MCF 10A (cell line): ENCODE measurements at regions of chr5 and their contacts with region 1.

Region 1: DNA sequence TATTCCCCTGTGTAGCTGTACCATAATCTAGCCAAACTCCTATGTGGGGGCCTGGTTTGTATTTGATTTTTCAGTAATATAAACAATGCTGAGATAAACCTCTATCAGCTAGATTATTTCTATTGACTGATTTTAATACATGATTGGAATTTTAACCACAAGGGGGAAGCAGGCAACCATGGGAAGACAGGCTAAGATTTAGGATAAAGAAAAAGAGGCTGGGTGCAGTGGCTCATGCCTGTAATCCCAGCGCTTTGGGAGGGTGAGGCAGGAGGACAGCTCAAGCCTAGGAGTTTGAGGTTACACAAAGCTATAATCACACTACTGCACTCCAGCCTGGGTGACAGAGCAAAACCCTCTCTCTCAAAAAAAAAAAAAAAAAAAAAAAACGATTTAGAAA is 18.1 kb upstream of the GPX3 start:
- DNase-seq: peak; percentile 77
- H3K4me3 Mint-ChIP-seq: no peak overlapping the region
- H3K27ac Mint-ChIP-seq: no peak overlapping the region
- H3K4me1 Mint-ChIP-seq: no peaks in the 10 kb centered on the region
- H3K27me3 Mint-ChIP-seq: no peaks in the 10 kb centered on the region
- CTCF ChIP-seq: peak; percentile 79

Region 2: GRCh38 chr5:151030400-151030799 is 28.1 kb after region 1 on chr5:
- CTCF ChIA-PET with region 1: interaction called, 13 read pairs
- POLR2A ChIA-PET with region 1: interaction called, 3 read pairs
- intact Hi-C with region 1: no loop called
- DNase-seq: no peak
- H3K4me3 Mint-ChIP-seq: no peak overlapping the region
- H3K27ac Mint-ChIP-seq: no peak overlapping the region
- H3K4me1 Mint-ChIP-seq: peaks cover 13% of the 10 kb centered on the region
- H3K27me3 Mint-ChIP-seq: no peaks in the 10 kb centered on the region
- CTCF ChIP-seq: no peak

Region 3: DNA sequence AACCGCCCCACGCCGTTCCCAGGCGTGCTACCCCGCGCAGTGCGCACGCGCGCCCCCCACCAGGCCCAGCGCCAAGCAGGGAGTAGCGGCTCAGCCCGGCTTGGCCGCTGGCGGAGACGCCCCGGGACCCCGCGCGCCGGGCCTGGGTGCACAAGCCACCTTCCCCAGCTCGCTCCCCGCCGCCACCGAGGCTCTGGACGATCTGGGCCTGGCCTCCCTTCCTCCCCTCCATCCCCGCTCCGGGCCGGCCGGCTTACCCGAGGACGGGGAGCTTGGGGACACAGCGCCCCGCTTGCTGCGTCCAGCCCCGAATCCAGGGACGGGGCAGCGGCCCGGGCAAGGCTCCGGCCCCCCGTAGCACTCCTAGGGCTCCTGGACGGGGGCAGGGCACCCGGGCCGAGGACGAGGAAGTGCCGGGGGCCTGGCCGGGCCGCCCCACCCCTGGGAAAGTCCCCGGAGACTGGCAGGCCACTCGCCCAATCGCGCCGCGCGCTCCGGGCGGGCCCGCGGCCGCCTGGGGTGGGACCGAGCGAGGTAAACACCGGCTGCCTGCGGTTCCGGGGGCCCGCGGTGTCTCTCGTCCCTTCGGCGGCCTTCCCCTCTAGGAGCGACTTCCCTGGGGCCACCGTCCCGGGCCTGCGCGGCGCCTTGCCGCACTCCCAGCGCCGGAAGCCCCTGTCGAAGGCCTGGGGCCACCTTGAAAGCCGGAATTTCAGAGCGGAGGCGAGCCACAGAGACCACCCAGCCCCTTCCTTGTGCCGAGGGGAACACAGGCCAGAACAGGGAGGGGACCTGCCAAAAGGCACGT is 78.6 kb after region 1 on chr5 and contains the start of gene TNIP1:
- CTCF ChIA-PET with region 1: interaction called, 11 read pairs
- POLR2A ChIA-PET with region 1: no interaction called
- intact Hi-C with region 1: no loop called
- DNase-seq: peak; percentile 94
- H3K4me3 Mint-ChIP-seq: peak within 1 kb of the TSS; percentile 74
- H3K27ac Mint-ChIP-seq: peak within 1 kb of the TSS; percentile 59
- H3K4me1 Mint-ChIP-seq: peaks cover 78% of the 10 kb centered on the region
- H3K27me3 Mint-ChIP-seq: no peaks in the 10 kb centered on the region
- CTCF ChIP-seq: no peak
- total RNA-seq, gene TNIP1: 246 and 342 TPM in 2 replicates

Region 4: DNA sequence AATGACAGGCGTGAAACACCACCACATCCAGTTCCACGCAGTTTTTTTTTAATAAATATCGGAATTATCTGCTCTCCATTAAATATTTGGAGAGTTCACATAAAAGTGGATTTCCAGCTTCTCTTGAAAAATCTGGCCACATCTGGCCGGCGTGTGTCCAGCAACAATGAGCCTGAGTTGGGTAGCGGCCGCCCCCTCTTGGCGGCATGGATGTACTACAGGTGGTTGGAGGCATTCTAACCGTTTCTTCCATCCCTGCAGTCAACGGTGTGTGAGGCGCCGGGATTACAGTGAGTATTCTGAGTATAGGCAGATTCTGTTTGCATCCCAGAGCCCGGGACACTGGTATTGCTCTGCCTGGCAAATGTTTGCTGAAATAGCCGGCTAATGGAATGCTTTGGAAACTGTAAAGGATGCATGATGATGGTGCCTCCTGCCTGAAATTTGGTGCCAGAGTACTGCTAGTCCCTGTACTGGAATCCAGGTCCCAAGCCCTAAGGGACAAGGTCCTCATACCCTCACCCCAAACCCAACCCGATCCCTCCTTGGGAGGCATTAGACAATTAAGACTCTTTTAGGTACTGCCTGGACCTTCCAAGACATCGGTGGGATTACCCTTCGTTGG is 237.1 kb after region 1 on chr5:
- CTCF ChIA-PET with region 1: interaction called, 9 read pairs
- POLR2A ChIA-PET with region 1: no interaction called
- intact Hi-C with region 1: loop called (anchors 1 kb)
- DNase-seq: peak; percentile 83
- H3K4me3 Mint-ChIP-seq: no peak overlapping the region
- H3K27ac Mint-ChIP-seq: peak overlapping the region; percentile 20
- H3K4me1 Mint-ChIP-seq: peaks cover 4% of the 10 kb centered on the region
- H3K27me3 Mint-ChIP-seq: no peaks in the 10 kb centered on the region
- CTCF ChIP-seq: peak; percentile 98

Region 5: DNA sequence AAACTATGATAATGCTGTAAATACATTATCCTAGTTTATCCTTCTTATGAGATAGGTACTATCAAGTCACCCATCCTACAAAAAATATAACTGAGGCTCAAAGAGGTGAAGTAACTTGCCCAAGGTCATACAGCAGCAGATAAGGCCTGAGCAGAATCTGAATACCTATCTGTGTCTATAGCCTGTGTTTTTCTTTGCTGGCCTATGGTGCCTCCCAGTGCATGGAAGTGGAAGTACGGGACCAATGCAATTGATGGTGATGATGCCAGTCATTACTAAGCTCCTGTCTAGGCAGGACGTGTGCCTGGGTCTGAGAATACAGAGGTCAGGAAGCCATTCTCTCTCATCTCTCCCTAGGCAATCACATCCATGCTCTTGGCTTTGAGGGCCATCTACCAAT is 521.1 kb after region 1 on chr5:
- CTCF ChIA-PET with region 1: no interaction called
- POLR2A ChIA-PET with region 1: no interaction called
- intact Hi-C with region 1: loop called (anchors 10 kb)
- DNase-seq: peak; percentile 71
- H3K4me3 Mint-ChIP-seq: no peak overlapping the region
- H3K27ac Mint-ChIP-seq: no peak overlapping the region
- H3K4me1 Mint-ChIP-seq: peaks cover 2% of the 10 kb centered on the region
- H3K27me3 Mint-ChIP-seq: no peaks in the 10 kb centered on the region
- CTCF ChIP-seq: peak; percentile 84